Activated CD4-positive, alpha-beta memory T cell treated with anti-CD3 and anti-CD28 coated beads for 36 hours (primary cell): ENCODE measurements at regions of chr1 and their contacts with region 1.

Region 1: GRCh38 chr1:176897350-176898236 is 266.9 kb downstream of the ASTN1 start:
- DNase-seq: peak; percentile 51
- H3K4me3 Mint-ChIP-seq: no peak overlapping the region
- H3K27ac Mint-ChIP-seq: no peak overlapping the region
- H3K4me1 Mint-ChIP-seq: peaks cover 3% of the 10 kb centered on the region
- H3K27me3 Mint-ChIP-seq: peaks cover 5% of the 10 kb centered on the region

Region 2: DNA sequence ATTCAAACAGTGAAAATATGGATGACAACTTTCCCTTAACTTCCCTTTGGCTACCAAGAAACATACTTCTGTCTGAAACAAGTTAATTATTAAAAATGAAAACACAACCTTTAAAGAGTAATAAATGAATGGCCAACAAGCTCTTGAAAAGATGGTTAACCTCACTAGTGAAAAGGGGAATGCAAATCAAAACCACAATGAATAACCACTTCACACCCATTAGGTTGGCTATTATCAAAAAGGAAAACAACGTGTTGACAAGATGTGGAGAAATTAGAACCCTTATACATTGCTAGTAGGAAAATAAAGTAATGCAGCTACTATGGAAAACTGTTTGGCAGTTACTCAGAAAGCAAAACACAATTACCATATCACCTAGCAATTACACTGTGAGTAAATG is 704.6 kb before region 1 on chr1:
- CTCF ChIA-PET with region 1: no interaction called
- POLR2A ChIA-PET with region 1: no interaction called
- intact Hi-C with region 1: no loop called
- DNase-seq: no peak
- H3K4me3 Mint-ChIP-seq: no peak overlapping the region
- H3K27ac Mint-ChIP-seq: no peak overlapping the region
- H3K4me1 Mint-ChIP-seq: peaks cover 74% of the 10 kb centered on the region
- H3K27me3 Mint-ChIP-seq: no peaks in the 10 kb centered on the region

Region 3: GRCh38 chr1:176949033-176949662 is 51.6 kb after region 1 on chr1:
- CTCF ChIA-PET with region 1: interaction called, 4 read pairs
- POLR2A ChIA-PET with region 1: no interaction called
- intact Hi-C with region 1: loop called (anchors 2 kb)
- DNase-seq: peak; percentile 41
- H3K4me3 Mint-ChIP-seq: no peak overlapping the region
- H3K27ac Mint-ChIP-seq: no peak overlapping the region
- H3K4me1 Mint-ChIP-seq: no peaks in the 10 kb centered on the region
- H3K27me3 Mint-ChIP-seq: no peaks in the 10 kb centered on the region

Region 4: GRCh38 chr1:177181631-177182291 is 284.2 kb after region 1 on chr1:
- CTCF ChIA-PET with region 1: no interaction called
- POLR2A ChIA-PET with region 1: no interaction called
- intact Hi-C with region 1: loop called (anchors 5 kb)
- DNase-seq: peak; percentile 43
- H3K4me3 Mint-ChIP-seq: no peak overlapping the region
- H3K27ac Mint-ChIP-seq: no peak overlapping the region
- H3K4me1 Mint-ChIP-seq: peaks cover 3% of the 10 kb centered on the region
- H3K27me3 Mint-ChIP-seq: peaks cover 18% of the 10 kb centered on the region

Region 5: GRCh38 chr1:177945943-177946650 is 1048.5 kb after region 1 on chr1:
- CTCF ChIA-PET with region 1: no interaction called
- POLR2A ChIA-PET with region 1: no interaction called
- intact Hi-C with region 1: loop called (anchors 1 kb)
- DNase-seq: peak; percentile 44
- H3K4me3 Mint-ChIP-seq: no peak overlapping the region
- H3K27ac Mint-ChIP-seq: no peak overlapping the region
- H3K4me1 Mint-ChIP-seq: no peaks in the 10 kb centered on the region
- H3K27me3 Mint-ChIP-seq: peaks cover 6% of the 10 kb centered on the region